ENCODE measurements at regions of chr1 and their contacts with region 1.

Region 1: GRCh38 chr1:207885129-207886032 is 25.5 kb downstream of the CD34 start:
- DNase-seq: peak; percentile 43 to 87 (median 68)
- ATAC-seq: peak; percentile 74
- H3K4me3 ChIP-seq: no peak overlapping the region
- H3K4me3 Mint-ChIP-seq: peak overlapping the region; percentile 20
- H3K27ac ChIP-seq: no peak overlapping the region
- H3K27ac Mint-ChIP-seq: peak overlapping the region; percentile 96
- H3K4me1 ChIP-seq: peaks cover 26% of the 10 kb centered on the region
- H3K4me1 Mint-ChIP-seq: peaks cover 37% of the 10 kb centered on the region
- H3K27me3 ChIP-seq: no peaks in the 10 kb centered on the region
- H3K27me3 Mint-ChIP-seq: peaks cover 3% of the 10 kb centered on the region
- CTCF ChIP-seq: peak; percentile 86

Region 2: DNA sequence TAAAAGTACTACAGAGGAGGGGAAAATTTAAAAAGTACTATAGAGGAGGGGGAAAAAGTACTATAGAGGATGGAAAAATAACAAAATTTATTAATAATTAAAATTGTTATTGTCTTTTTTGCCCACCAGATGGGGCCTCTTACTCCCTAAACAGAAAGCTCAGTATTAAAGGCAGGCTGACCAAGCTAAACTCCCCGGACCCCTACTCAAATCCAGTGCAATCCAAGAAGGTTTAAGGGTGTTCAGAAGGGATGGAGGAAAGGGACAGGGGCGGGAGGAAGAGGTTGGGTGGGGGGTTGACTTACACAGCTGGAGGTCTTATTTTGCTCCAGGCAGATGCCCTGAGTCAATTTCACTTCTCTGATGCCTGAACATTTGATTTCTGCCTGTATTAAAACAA is 11.8 kb after region 1 on chr1:
- CTCF ChIA-PET with region 1: interaction called, 55 read pairs
- POLR2A ChIA-PET with region 1: no interaction called
- intact Hi-C with region 1: no loop called
- DNase-seq: no peak
- ATAC-seq: no peak
- H3K4me3 ChIP-seq: no peak overlapping the region
- H3K4me3 Mint-ChIP-seq: no peak overlapping the region
- H3K27ac ChIP-seq: no peak overlapping the region
- H3K27ac Mint-ChIP-seq: no peak overlapping the region
- H3K4me1 ChIP-seq: no peaks in the 10 kb centered on the region
- H3K4me1 Mint-ChIP-seq: no peaks in the 10 kb centered on the region
- H3K27me3 ChIP-seq: no peaks in the 10 kb centered on the region
- H3K27me3 Mint-ChIP-seq: no peaks in the 10 kb centered on the region
- CTCF ChIP-seq: no peak

Region 3: GRCh38 chr1:207997486-207998268 is 112.3 kb after region 1 on chr1:
- CTCF ChIA-PET with region 1: interaction called, 12 read pairs
- POLR2A ChIA-PET with region 1: no interaction called
- intact Hi-C with region 1: loop called in 1 of 2 experiments (anchors 1 kb)
- DNase-seq: peak in 8 of 9 experiments; percentile 10 to 65 (median 48)
- ATAC-seq: peak; percentile 73
- H3K4me3 ChIP-seq: no peak overlapping the region
- H3K4me3 Mint-ChIP-seq: no peak overlapping the region
- H3K27ac ChIP-seq: no peak overlapping the region
- H3K27ac Mint-ChIP-seq: no peak overlapping the region
- H3K4me1 ChIP-seq: no peaks in the 10 kb centered on the region
- H3K4me1 Mint-ChIP-seq: no peaks in the 10 kb centered on the region
- H3K27me3 ChIP-seq: no peaks in the 10 kb centered on the region
- H3K27me3 Mint-ChIP-seq: peaks cover 4% of the 10 kb centered on the region
- CTCF ChIP-seq: peak; percentile 59

Region 4: DNA sequence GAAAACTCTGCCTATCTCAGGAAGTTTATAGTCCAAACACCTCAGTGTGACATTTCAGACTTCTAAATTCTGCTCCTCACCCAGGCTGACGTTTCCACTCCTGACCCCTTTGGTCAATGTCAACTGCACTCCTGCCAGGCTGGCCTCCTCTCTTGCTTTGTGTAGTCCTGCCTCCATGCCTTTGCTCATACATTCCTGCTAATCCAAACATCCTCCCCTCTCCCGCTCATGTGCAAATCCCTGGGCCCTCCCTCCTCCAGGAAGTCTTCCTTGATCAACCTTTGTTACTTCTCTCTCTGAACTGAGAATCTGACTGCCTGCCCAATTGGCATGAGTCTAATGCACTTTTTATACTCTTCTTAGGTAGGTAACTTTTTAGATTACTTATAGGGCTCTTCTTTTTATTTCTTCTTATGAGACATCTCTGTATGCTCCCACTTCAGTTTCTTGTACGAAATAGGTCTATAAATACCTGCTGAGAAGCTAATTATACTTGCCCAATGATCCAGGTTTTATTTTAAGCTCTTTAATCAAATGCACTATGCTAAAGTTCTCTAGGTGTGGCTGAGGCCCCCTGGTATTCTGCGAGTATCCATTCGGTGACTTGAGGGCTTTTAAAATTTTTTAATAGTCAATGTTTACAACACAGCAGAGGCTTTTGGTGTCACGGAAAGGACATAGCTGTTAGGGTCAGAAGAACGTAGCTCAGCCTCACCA is 230.7 kb after region 1 on chr1:
- CTCF ChIA-PET with region 1: no interaction called
- POLR2A ChIA-PET with region 1: no interaction called
- intact Hi-C with region 1: no loop called
- DNase-seq: no peak
- ATAC-seq: no peak
- H3K4me3 ChIP-seq: no peak overlapping the region
- H3K4me3 Mint-ChIP-seq: no peak overlapping the region
- H3K27ac ChIP-seq: no peak overlapping the region
- H3K27ac Mint-ChIP-seq: no peak overlapping the region
- H3K4me1 ChIP-seq: no peaks in the 10 kb centered on the region
- H3K4me1 Mint-ChIP-seq: no peaks in the 10 kb centered on the region
- H3K27me3 ChIP-seq: no peaks in the 10 kb centered on the region
- H3K27me3 Mint-ChIP-seq: no peaks in the 10 kb centered on the region
- CTCF ChIP-seq: no peak